ENCODE measurements at regions of chr15 and their contacts with region 1.

Region 1: GRCh38 chr15:91852741-91853510 is 582 bp upstream of the SLCO3A1 start:
- DNase-seq: peak; percentile 60 to 86 (median 78)
- ATAC-seq: peak; percentile 79
- H3K4me3 ChIP-seq: peak overlapping the region; percentile 72
- H3K4me3 Mint-ChIP-seq: peak overlapping the region; percentile 79 to 90 (median 86)
- H3K27ac ChIP-seq: peak overlapping the region; percentile 76
- H3K27ac Mint-ChIP-seq: peak overlapping the region; percentile 79 to 96 (median 89)
- H3K4me1 ChIP-seq: peaks cover 46 to 59% of the 10 kb centered on the region in 2 donors
- H3K4me1 Mint-ChIP-seq: peaks cover 50 to 70% (median 60%) of the 10 kb centered on the region in 7 donors
- H3K27me3 ChIP-seq: no peaks in the 10 kb centered on the region
- H3K27me3 Mint-ChIP-seq: peaks cover 0 to 9% (median 0%) of the 10 kb centered on the region in 5 donors

Region 2: DNA sequence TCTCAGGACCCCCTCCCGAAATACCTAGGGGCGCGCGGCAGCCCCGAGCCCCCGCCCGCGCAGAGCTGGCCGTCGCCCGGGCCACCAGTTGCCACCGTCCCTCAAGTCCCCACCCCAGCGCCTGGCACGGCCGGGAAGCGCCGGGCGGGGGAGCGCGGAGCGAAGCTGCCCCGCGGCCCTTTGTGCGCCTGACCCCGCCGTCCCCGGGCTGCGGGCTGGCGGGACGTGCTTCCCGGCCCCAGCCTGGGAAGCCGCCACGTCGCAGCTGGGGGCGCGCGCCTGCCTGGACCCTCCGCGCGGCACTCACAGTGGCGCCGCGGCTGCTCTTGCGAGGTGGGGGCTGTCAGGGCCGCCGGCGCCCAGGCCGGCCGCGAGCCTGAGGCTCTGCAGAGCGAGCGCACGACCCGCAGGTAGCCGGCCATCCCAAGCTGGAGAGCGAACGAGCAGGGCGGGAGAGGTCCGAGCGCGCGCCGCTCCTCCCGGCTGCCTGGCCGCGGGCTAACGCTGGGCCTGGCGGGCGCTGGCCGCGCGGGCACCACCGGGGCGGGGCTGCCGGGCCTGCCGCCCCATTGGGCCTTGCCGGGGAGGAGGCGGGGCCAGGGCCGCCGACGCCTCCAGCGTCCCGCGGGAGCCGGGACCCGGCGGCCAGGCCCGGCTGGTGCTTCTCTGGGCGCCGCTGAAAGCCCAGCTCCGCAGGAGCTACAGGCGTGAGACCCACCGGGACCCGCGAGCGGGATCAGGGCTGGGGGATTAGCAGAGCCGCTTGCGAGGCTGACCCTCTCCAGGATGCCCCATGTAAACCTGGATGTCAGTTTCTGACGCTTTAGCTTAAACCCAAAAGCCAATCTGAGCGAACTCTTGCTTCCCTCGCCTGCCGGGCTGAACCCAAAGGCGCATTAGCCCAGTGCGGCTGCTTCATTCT is 1750.7 kb before region 1 on chr15 and contains the start of gene IDH2:
- CTCF ChIA-PET with region 1: no interaction called
- POLR2A ChIA-PET with region 1: no interaction called
- intact Hi-C with region 1: loop called in 1 of 2 experiments (anchors 5 kb)
- DNase-seq: peak; percentile 60 to 86 (median 74)
- ATAC-seq: peak; percentile 89
- H3K4me3 ChIP-seq: peak within 1 kb of the TSS; percentile 78
- H3K4me3 Mint-ChIP-seq: peak within 1 kb of the TSS; percentile 82 to 97 (median 92)
- H3K27ac ChIP-seq: peak within 1 kb of the TSS; percentile 90
- H3K27ac Mint-ChIP-seq: peak within 1 kb of the TSS; percentile 94 to 99 (median 98)
- H3K4me1 ChIP-seq: peaks cover 38 to 44% of the 10 kb centered on the region in 2 donors
- H3K4me1 Mint-ChIP-seq: peaks cover 43 to 60% (median 52%) of the 10 kb centered on the region in 7 donors
- H3K27me3 ChIP-seq: no peaks in the 10 kb centered on the region
- H3K27me3 Mint-ChIP-seq: peaks cover 0 to 24% (median 0%) of the 10 kb centered on the region in 5 donors
- total RNA-seq, gene IDH2: 32.4 to 230 (median 33.7) TPM

Region 3: GRCh38 chr15:91302588-91303439 is 550.1 kb before region 1 on chr15:
- CTCF ChIA-PET with region 1: interaction called, 8 read pairs
- POLR2A ChIA-PET with region 1: no interaction called
- intact Hi-C with region 1: loop called (anchors 2 kb)
- DNase-seq: peak in 6 of 9 donors; percentile 32 to 64 (median 55)
- ATAC-seq: peak; percentile 79
- H3K4me3 ChIP-seq: no peak overlapping the region
- H3K4me3 Mint-ChIP-seq: peak overlapping the region in 7 of 10 donors; percentile 20 to 61 (median 57)
- H3K27ac ChIP-seq: no peak overlapping the region
- H3K27ac Mint-ChIP-seq: peak overlapping the region in 3 of 9 donors; percentile 15 to 63 (median 34)
- H3K4me1 ChIP-seq: peaks cover 16 to 27% of the 10 kb centered on the region in 2 donors
- H3K4me1 Mint-ChIP-seq: peaks cover 19 to 53% (median 45%) of the 10 kb centered on the region in 7 donors
- H3K27me3 ChIP-seq: no peaks in the 10 kb centered on the region
- H3K27me3 Mint-ChIP-seq: peaks cover 0 to 70% (median 0%) of the 10 kb centered on the region in 5 donors

Region 4: DNA sequence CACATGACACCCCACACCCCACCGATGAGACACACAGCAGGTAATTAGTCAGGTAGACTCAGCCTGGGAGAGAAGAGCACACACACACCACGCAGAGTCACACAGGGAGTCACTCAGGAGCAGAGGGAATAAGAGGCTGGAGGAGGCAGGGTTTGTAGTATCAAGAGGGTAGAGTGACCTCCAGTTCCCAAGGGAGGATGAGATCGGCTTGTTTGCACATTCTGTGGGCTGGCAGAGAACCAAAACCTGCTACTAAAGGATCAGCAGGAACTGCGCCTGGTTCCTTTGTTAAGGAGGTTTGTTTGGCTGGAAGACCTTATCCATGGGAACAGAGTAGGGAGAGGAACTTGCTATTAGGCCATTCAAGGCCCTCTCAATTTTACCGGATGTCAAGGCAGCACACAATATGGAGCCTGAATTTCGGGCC is 280.8 kb before region 1 on chr15:
- CTCF ChIA-PET with region 1: no interaction called
- POLR2A ChIA-PET with region 1: no interaction called
- intact Hi-C with region 1: no loop called
- DNase-seq: no peak
- ATAC-seq: no peak
- H3K4me3 ChIP-seq: no peak overlapping the region
- H3K4me3 Mint-ChIP-seq: no peak overlapping the region
- H3K27ac ChIP-seq: no peak overlapping the region
- H3K27ac Mint-ChIP-seq: no peak overlapping the region
- H3K4me1 ChIP-seq: no peaks in the 10 kb centered on the region
- H3K4me1 Mint-ChIP-seq: peaks cover 0 to 3% (median 0%) of the 10 kb centered on the region in 7 donors
- H3K27me3 ChIP-seq: no peaks in the 10 kb centered on the region
- H3K27me3 Mint-ChIP-seq: peaks cover 0 to 40% (median 7%) of the 10 kb centered on the region in 5 donors

Region 5: DNA sequence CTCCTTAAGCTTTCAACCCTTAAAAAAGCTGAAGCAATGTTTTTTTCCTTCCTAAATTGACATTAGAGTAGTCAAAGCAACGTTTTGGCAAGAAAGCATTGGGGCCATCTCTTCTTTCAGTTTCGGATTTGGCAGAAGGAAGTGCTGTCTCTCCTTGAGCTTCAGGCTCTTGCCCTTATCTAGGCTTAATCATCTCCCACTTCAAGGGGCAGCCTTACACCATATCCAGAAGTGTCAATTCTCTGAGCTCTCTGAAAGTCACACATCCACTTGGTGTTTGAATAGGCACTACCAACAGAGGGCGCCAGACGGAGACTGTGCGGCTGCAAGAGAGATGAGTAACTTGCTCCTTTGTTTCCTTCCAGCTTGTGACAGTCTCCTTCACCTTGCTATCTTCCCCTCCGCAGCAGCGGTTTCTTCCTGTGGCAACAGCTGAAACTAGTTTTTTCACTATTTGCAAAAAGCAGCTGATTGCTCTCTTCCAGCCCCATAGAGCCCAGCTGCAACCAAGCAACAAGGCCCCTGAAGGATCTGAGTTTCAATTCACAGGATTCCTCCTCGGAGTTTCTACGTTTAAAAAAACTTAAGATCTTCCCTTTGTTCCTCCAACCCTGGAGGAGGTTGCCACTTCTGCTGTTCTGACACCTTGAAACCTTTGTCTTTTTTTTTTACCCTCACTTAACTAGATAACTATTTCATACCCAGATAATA is 146.4 kb before region 1 on chr15:
- CTCF ChIA-PET with region 1: interaction called, 8 read pairs
- POLR2A ChIA-PET with region 1: no interaction called
- intact Hi-C with region 1: loop called (anchors 1 kb)
- DNase-seq: peak; percentile 58 to 84 (median 77)
- ATAC-seq: peak; percentile 98
- H3K4me3 ChIP-seq: no peak overlapping the region
- H3K4me3 Mint-ChIP-seq: peak overlapping the region in 9 of 10 donors; percentile 48 to 77 (median 62)
- H3K27ac ChIP-seq: no peak overlapping the region
- H3K27ac Mint-ChIP-seq: peak overlapping the region in 7 of 9 donors; percentile 37 to 88 (median 75)
- H3K4me1 ChIP-seq: peaks cover 10 to 13% of the 10 kb centered on the region in 2 donors
- H3K4me1 Mint-ChIP-seq: peaks cover 11 to 24% (median 20%) of the 10 kb centered on the region in 7 donors
- H3K27me3 ChIP-seq: no peaks in the 10 kb centered on the region
- H3K27me3 Mint-ChIP-seq: peaks cover 0 to 27% (median 4%) of the 10 kb centered on the region in 5 donors

Region 6: GRCh38 chr15:91824256-91824655 is 28.7 kb before region 1 on chr15:
- CTCF ChIA-PET with region 1: no interaction called
- POLR2A ChIA-PET with region 1: no interaction called
- intact Hi-C with region 1: no loop called
- DNase-seq: no peak
- ATAC-seq: no peak
- H3K4me3 ChIP-seq: no peak overlapping the region
- H3K4me3 Mint-ChIP-seq: no peak overlapping the region
- H3K27ac ChIP-seq: no peak overlapping the region
- H3K27ac Mint-ChIP-seq: no peak overlapping the region
- H3K4me1 ChIP-seq: no peaks in the 10 kb centered on the region
- H3K4me1 Mint-ChIP-seq: no peaks in the 10 kb centered on the region
- H3K27me3 ChIP-seq: no peaks in the 10 kb centered on the region
- H3K27me3 Mint-ChIP-seq: peaks cover 0 to 20% (median 6%) of the 10 kb centered on the region in 5 donors

Region 7: DNA sequence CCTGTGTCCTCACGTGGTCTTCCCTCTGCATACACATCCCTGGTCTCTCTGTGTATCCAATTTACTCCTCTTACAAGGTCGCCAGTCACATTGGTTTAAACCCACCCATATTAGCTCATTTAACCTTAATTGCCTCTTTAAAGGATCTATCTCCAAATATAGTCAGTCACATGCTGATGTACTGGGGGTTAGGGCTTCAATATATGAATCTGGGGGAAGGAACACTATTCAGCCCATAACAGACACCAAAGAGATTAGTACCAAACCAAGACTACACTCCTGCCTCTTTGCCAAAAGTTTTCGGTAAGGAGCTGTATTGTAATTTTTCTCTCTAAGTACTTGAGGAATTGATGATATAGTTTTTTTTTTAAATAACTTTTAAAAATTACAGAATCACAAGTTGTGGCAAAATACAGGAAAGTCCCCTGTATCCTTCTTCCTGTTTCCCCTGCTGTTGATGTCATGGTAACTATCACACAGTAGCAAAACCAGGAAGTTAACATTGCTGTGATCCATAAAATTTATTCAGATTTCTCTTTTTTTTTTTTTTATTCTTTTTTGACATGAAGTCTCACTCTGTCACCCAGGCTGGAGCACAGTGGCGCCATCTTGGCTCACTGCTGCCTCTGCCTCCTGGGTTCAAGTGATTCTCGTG is 68.4 kb after region 1 on chr15:
- CTCF ChIA-PET with region 1: no interaction called
- POLR2A ChIA-PET with region 1: no interaction called
- intact Hi-C with region 1: loop called in 1 of 2 experiments (anchors 1 kb)
- DNase-seq: peak in 5 of 9 donors; percentile 7 to 42 (median 25)
- ATAC-seq: peak; percentile 86
- H3K4me3 ChIP-seq: no peak overlapping the region
- H3K4me3 Mint-ChIP-seq: peak overlapping the region in 6 of 10 donors; percentile 2 to 16 (median 12)
- H3K27ac ChIP-seq: no peak overlapping the region
- H3K27ac Mint-ChIP-seq: peak overlapping the region in 4 of 9 donors; percentile 2 to 74 (median 20)
- H3K4me1 ChIP-seq: peaks cover 8 to 10% of the 10 kb centered on the region in 2 donors
- H3K4me1 Mint-ChIP-seq: peaks cover 17 to 66% (median 45%) of the 10 kb centered on the region in 7 donors
- H3K27me3 ChIP-seq: no peaks in the 10 kb centered on the region
- H3K27me3 Mint-ChIP-seq: no peaks in the 10 kb centered on the region

Region 8: GRCh38 chr15:92005154-92005553 is 152.2 kb after region 1 on chr15:
- CTCF ChIA-PET with region 1: no interaction called
- POLR2A ChIA-PET with region 1: no interaction called
- intact Hi-C with region 1: loop called in 1 of 2 experiments (anchors 5 kb)
- DNase-seq: no peak
- ATAC-seq: peak; percentile 36
- H3K4me3 ChIP-seq: no peak overlapping the region
- H3K4me3 Mint-ChIP-seq: no peak overlapping the region
- H3K27ac ChIP-seq: no peak overlapping the region
- H3K27ac Mint-ChIP-seq: peak overlapping the region in 1 of 9 donors; percentile 15
- H3K4me1 ChIP-seq: no peaks in the 10 kb centered on the region
- H3K4me1 Mint-ChIP-seq: peaks cover 14 to 86% (median 44%) of the 10 kb centered on the region in 7 donors
- H3K27me3 ChIP-seq: no peaks in the 10 kb centered on the region
- H3K27me3 Mint-ChIP-seq: no peaks in the 10 kb centered on the region

Region 9: DNA sequence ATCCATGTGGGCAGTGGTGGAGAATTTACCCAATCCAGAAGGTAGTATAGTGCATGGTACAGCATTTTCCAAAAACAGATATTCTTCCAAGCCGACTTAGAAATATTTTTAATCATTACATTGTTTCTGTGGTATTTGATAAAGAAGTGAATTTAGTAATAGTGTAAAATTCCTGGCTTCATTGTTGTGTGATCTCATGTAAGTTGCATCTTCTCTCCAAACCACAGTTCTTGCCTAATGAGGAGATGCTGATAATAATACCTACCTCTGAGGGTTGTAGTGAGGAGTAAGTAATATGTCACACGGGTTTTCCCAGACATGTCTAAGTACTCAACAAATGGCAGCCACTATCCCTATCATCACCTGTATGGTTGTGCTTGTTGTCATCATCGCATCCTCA is 167.8 kb after region 1 on chr15:
- CTCF ChIA-PET with region 1: no interaction called
- POLR2A ChIA-PET with region 1: no interaction called
- intact Hi-C with region 1: no loop called
- DNase-seq: no peak
- ATAC-seq: no peak
- H3K4me3 ChIP-seq: no peak overlapping the region
- H3K4me3 Mint-ChIP-seq: no peak overlapping the region
- H3K27ac ChIP-seq: no peak overlapping the region
- H3K27ac Mint-ChIP-seq: no peak overlapping the region
- H3K4me1 ChIP-seq: peaks cover 0 to 19% of the 10 kb centered on the region in 2 donors
- H3K4me1 Mint-ChIP-seq: peaks cover 0 to 65% (median 46%) of the 10 kb centered on the region in 7 donors
- H3K27me3 ChIP-seq: no peaks in the 10 kb centered on the region
- H3K27me3 Mint-ChIP-seq: no peaks in the 10 kb centered on the region

Region 10: GRCh38 chr15:92903941-92904831 is 1051.3 kb after region 1 on chr15:
- CTCF ChIA-PET with region 1: no interaction called
- POLR2A ChIA-PET with region 1: no interaction called
- intact Hi-C with region 1: loop called (anchors 10 kb)
- DNase-seq: peak; percentile 99
- ATAC-seq: peak; percentile 90
- H3K4me3 ChIP-seq: peak overlapping the region; percentile 79
- H3K4me3 Mint-ChIP-seq: peak overlapping the region; percentile 81 to 100 (median 94)
- H3K27ac ChIP-seq: peak overlapping the region; percentile 97
- H3K27ac Mint-ChIP-seq: peak overlapping the region; percentile 96 to 100 (median 100)
- H3K4me1 ChIP-seq: peaks cover 48 to 54% of the 10 kb centered on the region in 2 donors
- H3K4me1 Mint-ChIP-seq: peaks cover 39 to 71% (median 64%) of the 10 kb centered on the region in 7 donors
- H3K27me3 ChIP-seq: no peaks in the 10 kb centered on the region
- H3K27me3 Mint-ChIP-seq: no peaks in the 10 kb centered on the region

Measured in naive thymus-derived CD4-positive, alpha-beta T cell (primary cell).